MCF 10A (cell line): ENCODE measurements at regions of chr12 and their contacts with region 1.

Region 1: DNA sequence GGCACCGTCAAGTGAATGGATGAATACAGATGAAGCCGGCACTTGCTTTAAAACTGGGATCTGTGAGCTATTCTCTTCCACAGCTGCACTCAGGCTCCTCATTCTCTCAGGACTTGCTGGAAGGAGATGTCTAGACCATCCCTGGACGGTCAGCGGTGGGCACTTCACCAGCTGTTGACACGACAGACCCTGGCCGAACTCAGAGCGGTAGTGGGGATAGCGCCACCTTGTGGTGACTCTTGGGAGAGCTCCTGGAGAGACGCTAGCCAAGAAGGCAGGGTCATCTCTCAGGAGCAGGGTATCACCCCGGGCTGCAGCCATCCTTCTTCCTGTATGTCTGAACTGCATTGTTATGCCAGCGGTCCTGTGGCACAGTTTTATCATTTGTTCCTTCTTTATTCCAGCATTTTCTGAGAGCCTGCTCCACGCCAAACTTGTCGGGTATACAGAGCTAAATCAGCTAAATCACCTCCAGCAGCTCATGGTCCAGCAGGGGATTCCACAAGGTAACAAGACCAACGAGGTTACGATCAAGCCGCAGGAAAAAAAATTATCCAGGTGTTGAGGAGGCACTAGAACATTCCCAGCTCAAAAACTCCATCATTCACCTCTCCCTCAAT is 10.0 kb downstream of the WNT1 start:
- DNase-seq: peak; percentile 60
- H3K4me3 Mint-ChIP-seq: no peak overlapping the region
- H3K27ac Mint-ChIP-seq: no peak overlapping the region
- H3K4me1 Mint-ChIP-seq: no peaks in the 10 kb centered on the region
- H3K27me3 Mint-ChIP-seq: peaks cover 61% of the 10 kb centered on the region
- CTCF ChIP-seq: peak; percentile 89

Region 2: DNA sequence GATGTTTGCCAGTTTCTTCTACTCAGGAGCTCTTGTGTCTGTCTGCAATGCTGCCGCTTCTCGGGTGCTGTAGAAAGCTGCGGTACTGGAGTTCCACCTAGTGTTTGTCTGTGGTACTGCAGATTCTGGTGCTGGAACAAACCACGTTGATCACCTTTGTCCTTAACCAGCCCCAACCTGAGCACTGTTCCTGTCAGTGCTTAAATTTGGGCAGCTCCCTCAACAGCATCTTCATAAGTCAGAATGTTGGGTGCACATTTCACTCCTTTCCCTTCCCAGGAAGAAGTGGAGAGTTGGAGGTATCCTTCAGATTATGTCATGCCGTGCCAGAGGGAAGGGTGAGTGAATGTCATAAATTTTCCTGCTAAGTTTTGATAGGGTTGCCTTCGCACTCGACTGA is 369.6 kb before region 1 on chr12:
- CTCF ChIA-PET with region 1: no interaction called
- POLR2A ChIA-PET with region 1: no interaction called
- intact Hi-C with region 1: no loop called
- DNase-seq: peak; percentile 79
- H3K4me3 Mint-ChIP-seq: no peak overlapping the region
- H3K27ac Mint-ChIP-seq: no peak overlapping the region
- H3K4me1 Mint-ChIP-seq: no peaks in the 10 kb centered on the region
- H3K27me3 Mint-ChIP-seq: peaks cover 61% of the 10 kb centered on the region
- CTCF ChIP-seq: peak; percentile 91

Region 3: DNA sequence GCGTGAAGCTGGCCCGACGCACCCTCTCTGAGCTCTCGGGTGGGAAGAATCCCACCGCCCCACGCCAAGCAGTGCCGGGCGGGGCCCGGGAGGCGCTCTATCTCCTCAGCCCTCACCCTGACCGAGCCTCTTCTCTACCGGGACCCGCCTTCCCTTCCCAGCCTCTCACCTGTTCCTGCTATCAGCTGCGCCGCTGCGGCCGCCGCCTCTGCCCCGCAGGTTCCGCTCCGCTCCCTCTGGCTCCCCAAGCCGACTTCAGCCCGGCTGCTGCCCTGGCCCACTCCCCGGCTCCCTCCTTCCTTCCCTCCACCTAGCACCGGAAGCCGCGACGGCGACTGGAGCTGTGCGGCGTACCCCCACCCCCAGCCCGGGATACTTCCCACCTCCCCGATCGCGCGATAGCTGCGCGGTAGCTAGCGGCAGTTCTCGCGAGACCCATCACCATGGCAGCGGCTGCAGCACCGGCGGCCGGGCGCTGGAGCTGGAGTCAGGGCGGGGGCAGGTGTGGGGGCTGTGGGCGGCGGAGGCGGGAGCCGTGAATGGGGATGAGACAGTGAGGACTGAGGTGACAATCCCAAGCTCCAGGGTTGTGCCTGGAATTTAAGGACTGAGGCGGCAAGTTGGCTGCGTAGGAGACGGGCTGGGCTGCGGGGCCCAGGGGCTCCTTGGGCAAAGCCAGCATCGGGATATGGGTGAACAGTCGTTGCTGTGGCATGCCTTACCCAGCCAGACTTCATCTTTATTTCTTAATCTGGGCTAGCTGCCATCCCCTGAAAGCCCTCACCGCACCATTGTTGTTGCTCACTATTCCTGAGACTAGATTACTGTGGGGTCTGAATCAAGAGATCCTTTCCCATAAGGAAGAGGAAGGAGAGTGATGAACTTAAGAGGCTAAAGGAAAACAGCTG is 30.7 kb before region 1 on chr12 and contains the start of gene ARF3:
- CTCF ChIA-PET with region 1: interaction called, 18 read pairs
- POLR2A ChIA-PET with region 1: interaction called, 5 read pairs
- intact Hi-C with region 1: no loop called
- DNase-seq: peak; percentile 92
- H3K4me3 Mint-ChIP-seq: peak within 1 kb of the TSS; percentile 99
- H3K27ac Mint-ChIP-seq: peak within 1 kb of the TSS; percentile 93
- H3K4me1 Mint-ChIP-seq: peaks cover 34% of the 10 kb centered on the region
- H3K27me3 Mint-ChIP-seq: no peaks in the 10 kb centered on the region
- CTCF ChIP-seq: no peak
- total RNA-seq, gene ARF3: 117 and 129 TPM in 2 replicates

Region 4: GRCh38 chr12:48969833-48970701 is 18.1 kb before region 1 on chr12:
- CTCF ChIA-PET with region 1: interaction called, 17 read pairs
- POLR2A ChIA-PET with region 1: interaction called, 4 read pairs
- intact Hi-C with region 1: no loop called
- DNase-seq: no peak
- H3K4me3 Mint-ChIP-seq: peak overlapping the region; percentile 73
- H3K27ac Mint-ChIP-seq: no peak overlapping the region
- H3K4me1 Mint-ChIP-seq: peaks cover 14% of the 10 kb centered on the region
- H3K27me3 Mint-ChIP-seq: no peaks in the 10 kb centered on the region
- CTCF ChIP-seq: no peak

Region 5: DNA sequence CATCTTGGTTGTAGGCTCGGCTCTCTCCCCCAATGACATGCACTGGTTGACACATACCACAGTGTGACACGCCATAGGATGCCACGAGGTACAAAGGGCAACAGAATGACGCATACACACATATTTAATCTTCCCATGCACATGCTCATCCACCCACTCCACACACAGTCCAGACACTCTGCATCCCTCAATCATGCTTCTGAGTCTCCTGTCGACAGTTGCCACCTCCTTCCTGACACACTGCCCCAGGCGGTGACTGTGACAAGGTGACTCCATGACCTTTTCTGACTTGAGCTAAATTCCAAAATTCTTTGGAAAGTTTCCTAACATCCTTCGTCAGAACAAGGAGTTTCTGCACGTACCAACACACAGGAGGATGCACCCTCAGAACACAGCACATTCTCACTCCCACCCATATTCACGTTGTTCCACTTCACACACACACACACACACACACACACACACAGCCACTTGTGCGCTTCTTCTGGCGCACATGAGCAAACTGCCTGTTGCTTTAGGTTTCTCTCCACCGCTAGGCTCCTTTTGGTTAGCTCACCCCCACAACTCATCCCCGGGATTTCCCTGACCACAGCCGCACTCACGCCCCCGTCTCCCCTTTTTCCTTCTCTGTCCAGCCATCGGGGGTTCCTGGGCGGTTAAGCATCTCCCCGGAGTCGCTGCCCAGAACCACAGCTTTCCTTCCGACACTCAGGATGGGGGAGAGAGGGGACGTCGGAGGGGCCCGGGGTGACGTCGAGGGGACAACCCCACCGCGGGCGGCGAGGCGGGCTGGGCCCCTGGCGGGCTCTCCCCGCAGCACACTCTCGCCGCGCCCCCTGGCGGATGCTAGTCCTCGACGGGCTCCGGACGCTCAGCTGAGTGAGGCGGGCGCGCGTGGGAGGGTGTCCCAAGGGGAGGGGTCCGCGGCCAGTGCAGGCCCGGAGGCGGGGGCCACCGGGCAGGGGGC is 10.5 kb before region 1 on chr12:
- CTCF ChIA-PET with region 1: interaction called, 54 read pairs
- POLR2A ChIA-PET with region 1: no interaction called
- intact Hi-C with region 1: no loop called
- DNase-seq: peak; percentile 54
- H3K4me3 Mint-ChIP-seq: no peak overlapping the region
- H3K27ac Mint-ChIP-seq: no peak overlapping the region
- H3K4me1 Mint-ChIP-seq: peaks cover 6% of the 10 kb centered on the region
- H3K27me3 Mint-ChIP-seq: peaks cover 58% of the 10 kb centered on the region
- CTCF ChIP-seq: peak; percentile 77

Region 6: DNA sequence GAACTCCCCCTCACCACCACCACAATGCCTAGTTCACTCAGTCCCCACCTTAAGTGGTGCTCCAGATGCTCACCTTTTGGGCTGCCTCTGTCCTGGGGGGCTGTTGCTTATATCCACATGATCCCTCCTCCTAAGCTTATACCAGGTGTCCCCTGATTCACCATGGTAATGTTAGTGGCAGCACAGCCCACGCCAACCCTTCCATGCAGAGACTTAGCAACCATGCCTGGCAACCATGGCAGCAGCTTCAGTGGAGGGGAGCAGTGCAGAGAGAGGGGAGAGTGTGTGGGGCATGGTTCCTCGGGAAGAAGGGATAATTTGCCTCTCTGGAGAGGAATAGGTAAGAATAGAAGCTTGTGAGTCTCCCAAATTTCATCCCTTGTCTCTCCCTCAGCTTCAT is 12.2 kb after region 1 on chr12:
- CTCF ChIA-PET with region 1: interaction called, 27 read pairs
- POLR2A ChIA-PET with region 1: no interaction called
- intact Hi-C with region 1: no loop called
- DNase-seq: no peak
- H3K4me3 Mint-ChIP-seq: no peak overlapping the region
- H3K27ac Mint-ChIP-seq: no peak overlapping the region
- H3K4me1 Mint-ChIP-seq: peaks cover 14% of the 10 kb centered on the region
- H3K27me3 Mint-ChIP-seq: no peaks in the 10 kb centered on the region
- CTCF ChIP-seq: no peak

Region 7: GRCh38 chr12:49018261-49019119 is 30.4 kb after region 1 on chr12 and contains the start of gene PRKAG1:
- CTCF ChIA-PET with region 1: interaction called, 12 read pairs
- POLR2A ChIA-PET with region 1: no interaction called
- intact Hi-C with region 1: no loop called
- DNase-seq: peak; percentile 96
- H3K4me3 Mint-ChIP-seq: peak within 1 kb of the TSS; percentile 88
- H3K27ac Mint-ChIP-seq: peak within 1 kb of the TSS; percentile 99
- H3K4me1 Mint-ChIP-seq: peaks cover 15% of the 10 kb centered on the region
- H3K27me3 Mint-ChIP-seq: no peaks in the 10 kb centered on the region
- CTCF ChIP-seq: peak; percentile 25
- total RNA-seq, gene PRKAG1: 80.3 and 84.6 TPM in 2 replicates

Region 8: DNA sequence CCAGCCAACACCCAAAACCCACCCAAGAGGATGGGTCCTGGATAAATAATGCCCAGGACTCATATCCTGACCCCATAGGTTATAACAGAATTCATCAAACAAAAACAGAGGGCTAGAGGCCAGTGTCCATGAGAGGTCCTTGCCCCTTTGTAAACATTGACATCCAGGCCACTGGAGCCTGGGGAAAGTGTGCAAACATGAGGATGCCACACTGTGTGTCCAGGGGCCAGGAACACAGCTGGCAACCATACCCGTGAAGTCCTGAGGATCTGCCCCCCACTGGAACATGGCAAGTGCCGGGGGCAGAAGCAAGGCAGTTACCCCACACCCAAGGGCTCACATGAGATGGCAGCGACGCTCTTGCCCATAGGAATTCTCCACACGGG is 76.6 kb after region 1 on chr12:
- CTCF ChIA-PET with region 1: no interaction called
- POLR2A ChIA-PET with region 1: no interaction called
- intact Hi-C with region 1: no loop called
- DNase-seq: no peak
- H3K4me3 Mint-ChIP-seq: no peak overlapping the region
- H3K27ac Mint-ChIP-seq: no peak overlapping the region
- H3K4me1 Mint-ChIP-seq: peaks cover 22% of the 10 kb centered on the region
- H3K27me3 Mint-ChIP-seq: no peaks in the 10 kb centered on the region
- CTCF ChIP-seq: no peak